Adrenal gland (tissue), 19 donors: ENCODE measurements at regions of chr19 and their contacts with region 1.

Region 1: GRCh38 chr19:43784981-43785808 is 4.4 kb upstream of the KCNN4 start:
- DNase-seq: peak; percentile 61 to 78 (median 68)
- H3K4me3 ChIP-seq: no peak overlapping the region
- H3K27ac ChIP-seq: peak overlapping the region in 1 of 5 donors; percentile 52
- H3K4me1 ChIP-seq: peaks cover 4 to 8% of the 10 kb centered on the region in 2 donors
- H3K27me3 ChIP-seq: no peaks in the 10 kb centered on the region
- CTCF ChIP-seq: peak; percentile 92 to 99 (median 96)
- POLR2A ChIP-seq: no peak

Region 2: DNA sequence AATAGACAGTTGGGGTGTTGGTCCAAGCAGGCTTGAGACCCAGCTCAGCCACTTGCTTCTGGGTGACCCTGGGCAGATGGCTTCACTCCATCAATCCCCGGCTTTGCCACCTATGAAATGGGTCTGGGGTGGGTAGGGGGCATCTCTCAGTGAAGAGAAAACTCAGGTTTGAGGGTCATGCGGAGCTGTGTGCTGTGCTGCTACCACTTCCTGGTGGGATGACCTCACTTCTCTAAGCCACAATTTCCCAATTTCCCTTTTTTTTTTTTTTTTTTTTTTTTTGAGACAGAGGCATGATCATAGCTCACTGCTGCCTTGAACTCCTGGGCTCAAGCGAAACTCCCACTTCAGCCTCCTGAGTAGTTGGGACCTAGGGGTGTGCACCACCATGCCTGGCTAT is 110.6 kb before region 1 on chr19:
- intact Hi-C with region 1: loop called in 1 of 2 experiments (anchors 5 kb)
- DNase-seq: peak in 1 of 7 donors; percentile 28
- H3K4me3 ChIP-seq: no peak overlapping the region
- H3K27ac ChIP-seq: peak overlapping the region in 3 of 5 donors; percentile 52 to 65 (median 65)
- H3K4me1 ChIP-seq: peaks cover 5 to 8% of the 10 kb centered on the region in 2 donors
- H3K27me3 ChIP-seq: no peaks in the 10 kb centered on the region
- CTCF ChIP-seq: no peak
- POLR2A ChIP-seq: no peak

Region 3: DNA sequence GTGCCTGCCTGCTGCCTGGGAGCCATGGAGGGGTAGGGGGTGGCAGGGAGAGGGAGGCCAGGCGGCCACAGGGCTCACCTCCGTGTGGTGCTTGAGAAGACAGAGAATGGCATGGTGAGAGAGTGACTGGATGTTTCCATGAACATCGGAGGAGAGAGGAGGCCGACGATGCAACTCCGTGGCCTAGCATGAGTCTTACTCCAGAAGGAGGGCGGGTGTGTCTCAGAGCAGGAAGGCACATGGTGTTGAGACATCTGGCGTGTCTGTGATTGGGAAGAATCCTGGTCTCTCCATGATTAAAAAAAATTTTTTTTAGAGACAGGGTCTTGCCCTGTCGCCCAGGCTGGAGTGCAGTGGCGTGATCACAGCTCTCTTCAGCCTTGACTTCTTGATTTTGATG is 64.3 kb before region 1 on chr19:
- intact Hi-C with region 1: no loop called
- DNase-seq: no peak
- H3K4me3 ChIP-seq: no peak overlapping the region
- H3K27ac ChIP-seq: no peak overlapping the region
- H3K4me1 ChIP-seq: peaks cover 0 to 10% of the 10 kb centered on the region in 2 donors
- H3K27me3 ChIP-seq: no peaks in the 10 kb centered on the region
- CTCF ChIP-seq: no peak
- POLR2A ChIP-seq: no peak

Region 4: GRCh38 chr19:43747557-43748204 is 37.5 kb before region 1 on chr19:
- intact Hi-C with region 1: loop called (anchors 2 to 5 kb)
- DNase-seq: no peak
- H3K4me3 ChIP-seq: no peak overlapping the region
- H3K27ac ChIP-seq: no peak overlapping the region
- H3K4me1 ChIP-seq: peaks cover 6 to 10% of the 10 kb centered on the region in 2 donors
- H3K27me3 ChIP-seq: no peaks in the 10 kb centered on the region
- CTCF ChIP-seq: no peak
- POLR2A ChIP-seq: no peak

Region 5: DNA sequence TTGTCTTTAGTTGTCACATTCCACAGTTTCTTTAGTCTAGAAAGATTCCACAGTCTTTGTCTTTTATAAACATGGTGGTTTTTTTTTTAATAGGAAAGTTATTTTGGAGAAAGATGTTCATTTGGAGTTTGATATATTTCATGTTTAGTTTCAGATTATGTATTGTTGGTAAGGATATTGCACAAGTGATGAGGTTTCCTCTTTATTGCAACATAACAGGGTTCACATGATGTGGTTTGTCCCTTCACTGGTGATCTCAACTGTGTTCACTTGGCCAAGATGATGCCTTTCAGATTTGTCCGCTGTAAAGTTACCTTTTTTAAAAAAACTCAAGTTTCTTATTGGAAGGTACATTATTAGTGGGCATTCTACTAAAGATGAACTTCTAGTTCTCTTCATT is 220.8 kb after region 1 on chr19:
- intact Hi-C with region 1: no loop called
- DNase-seq: no peak
- H3K4me3 ChIP-seq: no peak overlapping the region
- H3K27ac ChIP-seq: no peak overlapping the region
- H3K4me1 ChIP-seq: peaks cover 3 to 13% of the 10 kb centered on the region in 2 donors
- H3K27me3 ChIP-seq: no peaks in the 10 kb centered on the region
- CTCF ChIP-seq: no peak
- POLR2A ChIP-seq: no peak